ENCODE measurements at regions of chr4 and their contacts with region 1.

Region 1: DNA sequence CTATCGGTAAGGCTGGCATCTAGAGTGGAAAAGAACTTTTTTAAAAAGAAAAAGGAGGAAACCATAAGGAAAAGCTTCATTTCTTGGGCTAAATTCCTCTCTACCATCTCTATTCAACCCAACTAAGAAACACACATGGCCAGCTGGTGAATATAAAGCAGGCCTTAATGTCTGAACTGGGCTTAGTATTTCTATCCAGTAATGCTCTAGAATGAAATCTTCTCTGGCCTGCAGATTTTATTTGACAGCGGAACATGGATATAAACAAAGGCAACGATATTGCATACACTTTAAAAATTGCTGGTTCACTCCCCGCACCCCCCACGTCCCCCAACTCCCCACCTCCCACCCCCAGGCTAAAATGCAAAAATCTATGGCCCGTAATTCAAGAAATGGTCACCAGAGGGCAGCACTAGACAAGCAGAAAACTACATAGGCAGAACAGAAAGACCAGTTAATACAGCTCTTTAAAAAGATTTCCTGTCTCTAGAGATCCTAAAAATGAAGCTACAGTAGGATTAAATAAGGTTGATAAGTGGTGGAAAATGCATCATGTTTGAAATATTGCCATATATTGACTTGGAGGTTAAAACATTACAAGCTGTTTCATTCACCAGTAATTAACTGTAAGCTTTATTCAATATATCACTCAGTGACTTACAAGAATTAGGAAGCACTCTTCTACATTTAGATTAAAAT is 155.2 kb upstream of the GALNT7 start:
- DNase-seq: peak; percentile 9
- ATAC-seq: peak; percentile 84
- H3K4me3 ChIP-seq: no peak overlapping the region
- H3K27ac ChIP-seq: no peak overlapping the region
- H3K4me1 ChIP-seq: no peaks in the 10 kb centered on the region
- H3K27me3 ChIP-seq: no peaks in the 10 kb centered on the region
- CTCF ChIP-seq: peak; percentile 42 to 65 (median 64); a peak in 5 of 6 replicates
- EP300 ChIP-seq: no peak
- POLR2A ChIP-seq: no peak
- RAD21 ChIP-seq: peak; percentile 94

Region 2: GRCh38 chr4:173025131-173025530 is 11.8 kb after region 1 on chr4:
- CTCF ChIA-PET with region 1: interaction called, 42 read pairs
- POLR2A ChIA-PET with region 1: no interaction called
- RAD21 ChIA-PET with region 1: interaction called, 25 read pairs
- SMC1A ChIA-PET with region 1: interaction called, 25 read pairs
- in situ Hi-C with region 1: no loop called
- intact Hi-C with region 1: no loop called
- DNase-seq: peak; percentile 16
- ATAC-seq: peak; percentile 95
- H3K4me3 ChIP-seq: no peak overlapping the region
- H3K27ac ChIP-seq: no peak overlapping the region
- H3K4me1 ChIP-seq: no peaks in the 10 kb centered on the region
- H3K27me3 ChIP-seq: no peaks in the 10 kb centered on the region; a peak in 1 of 4 replicates
- CTCF ChIP-seq: peak; percentile 54 to 63 (median 58); a peak in 5 of 6 replicates
- EP300 ChIP-seq: no peak
- POLR2A ChIP-seq: no peak
- RAD21 ChIP-seq: peak; percentile 91

Region 3: DNA sequence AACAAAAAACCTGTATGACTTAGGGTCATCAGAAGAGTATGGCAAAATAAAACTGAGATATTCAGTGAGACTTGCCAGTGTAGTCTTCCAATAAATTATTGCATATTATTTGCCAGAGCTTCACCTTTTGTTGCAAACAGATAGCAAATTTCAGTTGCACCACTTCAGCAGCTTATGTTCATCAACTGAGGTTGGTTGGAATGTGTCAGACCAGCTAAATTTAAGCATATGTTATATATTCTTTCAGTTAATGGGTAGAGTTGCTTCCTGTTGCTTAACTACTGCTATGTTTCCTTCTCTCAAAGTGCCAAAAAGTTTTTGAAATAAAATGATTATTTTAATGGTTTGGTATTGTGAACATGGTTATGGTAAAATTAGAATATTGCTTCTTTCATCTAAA is 216.7 kb after region 1 on chr4:
- CTCF ChIA-PET with region 1: interaction called, 11 read pairs
- POLR2A ChIA-PET with region 1: no interaction called
- RAD21 ChIA-PET with region 1: interaction called, 3 read pairs
- SMC1A ChIA-PET with region 1: interaction called, 4 read pairs
- in situ Hi-C with region 1: no loop called
- intact Hi-C with region 1: no loop called
- DNase-seq: no peak
- ATAC-seq: peak; percentile 46; the same call in 2 of the 3 replicates
- H3K4me3 ChIP-seq: no peak overlapping the region
- H3K27ac ChIP-seq: no peak overlapping the region
- H3K4me1 ChIP-seq: no peaks in the 10 kb centered on the region; the same call in 1 of the 2 replicates
- H3K27me3 ChIP-seq: no peaks in the 10 kb centered on the region
- CTCF ChIP-seq: no peak
- EP300 ChIP-seq: no peak
- POLR2A ChIP-seq: no peak
- RAD21 ChIP-seq: no peak

Region 4: GRCh38 chr4:173264684-173265185 is 251.4 kb after region 1 on chr4:
- CTCF ChIA-PET with region 1: interaction called, 45 read pairs
- POLR2A ChIA-PET with region 1: no interaction called
- RAD21 ChIA-PET with region 1: interaction called, 16 read pairs
- SMC1A ChIA-PET with region 1: interaction called, 20 read pairs
- in situ Hi-C with region 1: loop called (anchors 5 kb)
- intact Hi-C with region 1: no loop called
- DNase-seq: no peak
- ATAC-seq: peak; percentile 74
- H3K4me3 ChIP-seq: no peak overlapping the region
- H3K27ac ChIP-seq: no peak overlapping the region
- H3K4me1 ChIP-seq: peaks cover 4% of the 10 kb centered on the region; the same call in 1 of the 2 replicates
- H3K27me3 ChIP-seq: no peaks in the 10 kb centered on the region
- CTCF ChIP-seq: no peak
- EP300 ChIP-seq: no peak; a peak in 1 of 4 replicates
- POLR2A ChIP-seq: no peak
- RAD21 ChIP-seq: no peak

Region 5: GRCh38 chr4:173288296-173288695 is 274.9 kb after region 1 on chr4:
- CTCF ChIA-PET with region 1: interaction called, 25 read pairs
- POLR2A ChIA-PET with region 1: no interaction called
- RAD21 ChIA-PET with region 1: interaction called, 6 read pairs
- SMC1A ChIA-PET with region 1: interaction called, 10 read pairs
- in situ Hi-C with region 1: no loop called
- intact Hi-C with region 1: no loop called
- DNase-seq: peak; percentile 24
- ATAC-seq: peak; percentile 88
- H3K4me3 ChIP-seq: no peak overlapping the region
- H3K27ac ChIP-seq: no peak overlapping the region
- H3K4me1 ChIP-seq: peaks cover 5% of the 10 kb centered on the region; the same call in 1 of the 2 replicates
- H3K27me3 ChIP-seq: no peaks in the 10 kb centered on the region
- CTCF ChIP-seq: peak; percentile 60 to 67 (median 65)
- EP300 ChIP-seq: no peak
- POLR2A ChIP-seq: no peak
- RAD21 ChIP-seq: peak; percentile 63

Region 6: GRCh38 chr4:173307778-173308177 is 294.4 kb after region 1 on chr4:
- CTCF ChIA-PET with region 1: interaction called, 17 read pairs
- POLR2A ChIA-PET with region 1: no interaction called
- RAD21 ChIA-PET with region 1: interaction called, 10 read pairs
- SMC1A ChIA-PET with region 1: interaction called, 18 read pairs
- in situ Hi-C with region 1: no loop called
- intact Hi-C with region 1: no loop called
- DNase-seq: no peak
- ATAC-seq: no peak
- H3K4me3 ChIP-seq: no peak overlapping the region
- H3K27ac ChIP-seq: no peak overlapping the region
- H3K4me1 ChIP-seq: no peaks in the 10 kb centered on the region
- H3K27me3 ChIP-seq: no peaks in the 10 kb centered on the region
- CTCF ChIP-seq: no peak
- EP300 ChIP-seq: no peak
- POLR2A ChIP-seq: no peak
- RAD21 ChIP-seq: no peak

Region 7: DNA sequence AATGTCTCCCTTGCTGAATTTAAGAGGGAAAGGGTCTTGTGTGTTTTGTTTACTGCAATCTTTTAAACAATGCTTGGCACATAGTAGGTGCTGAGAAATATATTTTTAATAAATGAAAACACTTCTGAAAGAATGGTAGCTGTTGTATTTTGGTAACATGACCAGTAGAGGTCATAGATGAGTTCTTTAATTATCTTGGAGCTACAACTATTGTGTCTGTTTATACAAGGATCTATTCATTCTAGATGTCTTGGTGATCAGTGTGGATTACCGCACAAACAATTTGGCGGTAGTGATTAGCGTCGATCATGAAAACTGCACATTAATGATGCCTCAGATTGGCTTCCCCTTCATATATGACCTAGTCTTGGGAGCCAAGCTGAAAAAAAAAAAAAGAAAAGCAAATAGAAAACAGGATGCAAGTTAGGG is 407.0 kb after region 1 on chr4:
- CTCF ChIA-PET with region 1: interaction called, 16 read pairs
- POLR2A ChIA-PET with region 1: no interaction called
- RAD21 ChIA-PET with region 1: interaction called, 10 read pairs
- SMC1A ChIA-PET with region 1: interaction called, 13 read pairs
- in situ Hi-C with region 1: loop called (anchors 5 kb)
- intact Hi-C with region 1: loop called (anchors 1 kb)
- DNase-seq: no peak
- ATAC-seq: peak; percentile 71
- H3K4me3 ChIP-seq: no peak overlapping the region
- H3K27ac ChIP-seq: no peak overlapping the region
- H3K4me1 ChIP-seq: no peaks in the 10 kb centered on the region
- H3K27me3 ChIP-seq: no peaks in the 10 kb centered on the region
- CTCF ChIP-seq: peak; percentile 21 to 48 (median 39); a peak in 2 of 6 replicates
- EP300 ChIP-seq: no peak
- POLR2A ChIP-seq: no peak
- RAD21 ChIP-seq: peak; percentile 57

Measured in GM12878 (cell line).